Ovary (tissue), 10 donors: ENCODE measurements at regions of chr2 and their contacts with region 1.

Region 1: GRCh38 chr2:237060534-237061312 is 25.0 kb upstream of the COPS8 start:
- DNase-seq: peak in 4 of 5 donors; percentile 49 to 65 (median 58)
- H3K4me3 ChIP-seq: no peak overlapping the region
- H3K27ac ChIP-seq: no peak overlapping the region
- H3K4me1 ChIP-seq: peaks cover 6% of the 10 kb centered on the region
- H3K27me3 ChIP-seq: no peaks in the 10 kb centered on the region
- CTCF ChIP-seq: peak; percentile 68 to 74 (median 69)
- EP300 ChIP-seq: no peak
- POLR2A ChIP-seq: no peak

Region 2: DNA sequence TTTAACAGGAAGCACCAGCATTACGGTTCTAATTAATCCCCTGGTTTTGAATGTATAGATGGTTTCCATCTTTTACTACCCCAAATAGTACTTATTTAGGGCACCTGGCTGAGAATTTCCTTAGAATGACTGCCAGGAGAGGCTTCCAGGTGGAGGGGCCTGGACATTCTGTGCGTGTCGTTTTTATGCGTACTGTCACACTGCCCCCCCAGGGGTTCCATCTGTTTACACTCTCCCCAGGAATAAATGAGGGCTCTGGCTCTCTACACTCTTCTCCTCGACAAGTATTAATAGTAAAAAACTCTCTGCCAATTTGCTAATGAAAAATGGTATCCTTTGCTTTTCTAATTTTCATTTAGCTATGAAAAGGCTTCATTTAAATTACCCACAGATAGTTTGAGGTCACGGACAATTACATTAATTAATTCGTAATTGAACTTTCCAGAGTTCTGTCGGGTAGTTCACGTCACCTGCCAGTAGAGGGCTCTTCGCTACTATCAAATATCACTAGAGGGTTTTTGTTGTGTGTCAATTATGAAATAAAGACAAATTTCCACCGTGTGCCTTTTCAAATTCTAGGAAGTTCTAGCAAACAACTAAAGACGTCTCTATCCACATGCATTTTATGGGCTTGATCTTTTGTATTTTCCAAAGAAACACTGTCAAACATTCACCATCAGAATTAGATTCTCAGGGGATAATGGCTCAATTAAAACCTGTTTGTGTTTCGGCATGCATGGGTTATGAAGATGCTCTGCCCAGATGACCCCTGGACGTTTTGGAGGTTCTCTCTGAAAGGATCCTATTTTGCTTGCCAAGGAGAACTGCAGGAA is 707.7 kb before region 1 on chr2:
- intact Hi-C with region 1: loop called (anchors 2 to 5 kb)
- DNase-seq: peak in 1 of 5 donors; percentile 36
- H3K4me3 ChIP-seq: no peak overlapping the region
- H3K27ac ChIP-seq: no peak overlapping the region
- H3K4me1 ChIP-seq: no peaks in the 10 kb centered on the region
- H3K27me3 ChIP-seq: no peaks in the 10 kb centered on the region
- CTCF ChIP-seq: peak; percentile 55 to 73 (median 65)
- EP300 ChIP-seq: no peak
- POLR2A ChIP-seq: no peak

Region 3: DNA sequence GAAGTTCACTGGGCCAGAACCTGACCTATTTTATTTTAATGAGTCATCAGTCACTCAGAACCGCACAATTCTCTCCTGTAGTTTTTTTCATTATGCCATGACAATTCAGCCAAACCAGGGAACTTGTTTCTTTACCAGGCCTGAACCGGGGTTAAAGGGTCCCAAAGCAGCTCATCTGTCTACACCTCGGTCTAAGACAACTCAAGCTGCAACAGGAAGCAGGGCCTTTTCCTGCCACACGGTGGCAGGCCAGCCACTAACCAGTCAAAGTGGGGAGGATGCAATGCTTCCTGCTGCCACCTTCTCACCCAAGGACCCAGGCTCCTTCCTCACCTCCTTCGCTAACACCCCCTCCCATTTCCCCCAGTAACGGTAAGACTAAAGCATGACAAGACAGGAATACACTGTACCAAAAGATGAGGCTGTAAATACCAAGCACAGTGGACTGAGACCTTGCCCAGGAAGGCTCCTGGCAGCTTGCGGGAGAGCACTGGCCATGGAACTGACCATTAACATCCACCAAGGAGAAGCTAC is 547.8 kb before region 1 on chr2:
- intact Hi-C with region 1: loop called in 1 of 4 experiments (anchors 5 kb)
- DNase-seq: peak; percentile 32 to 71 (median 56)
- H3K4me3 ChIP-seq: no peak overlapping the region
- H3K27ac ChIP-seq: no peak overlapping the region
- H3K4me1 ChIP-seq: no peaks in the 10 kb centered on the region
- H3K27me3 ChIP-seq: no peaks in the 10 kb centered on the region
- CTCF ChIP-seq: peak; percentile 45 to 64 (median 51)
- EP300 ChIP-seq: no peak
- POLR2A ChIP-seq: no peak

Region 4: GRCh38 chr2:236569573-236569973 is 491.1 kb before region 1 on chr2 and contains the start of gene ACKR3:
- intact Hi-C with region 1: loop called in 1 of 4 experiments (anchors 10 kb)
- DNase-seq: peak; percentile 56 to 71 (median 62)
- H3K4me3 ChIP-seq: peak within 1 kb of the TSS; percentile 42
- H3K27ac ChIP-seq: peak within 1 kb of the TSS; percentile 66 to 90
- H3K4me1 ChIP-seq: peaks cover 2% of the 10 kb centered on the region
- H3K27me3 ChIP-seq: no peaks in the 10 kb centered on the region
- CTCF ChIP-seq: peak in 1 of 3 donors; percentile 33
- EP300 ChIP-seq: no peak
- POLR2A ChIP-seq: no peak
- total RNA-seq, gene ACKR3: 4.6 to 22.7 (median 7.4) TPM